OCI-LY7 (cell line): ENCODE measurements at regions of chr2 and their contacts with region 1.

Region 1: DNA sequence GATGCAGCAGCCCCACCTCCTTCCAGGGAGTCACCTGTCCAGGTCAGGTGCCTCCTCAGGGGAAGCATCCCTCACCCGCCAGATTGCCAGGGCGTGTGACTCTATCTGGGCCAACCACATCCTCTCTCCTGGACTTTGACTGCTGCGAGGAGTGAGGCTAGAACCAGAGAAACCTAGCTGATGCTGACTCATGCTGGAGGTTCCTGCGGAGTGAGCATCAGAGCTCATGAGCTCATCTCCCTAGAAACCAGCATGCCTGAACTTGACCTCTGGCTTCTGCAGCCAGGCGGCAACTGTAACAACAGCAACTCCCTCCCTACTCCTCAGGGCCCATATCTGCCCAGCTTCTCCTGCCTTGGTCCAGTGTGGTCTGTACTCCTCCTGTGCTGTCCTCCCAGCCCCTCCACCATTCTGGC is 28.3 kb upstream of the NT5DC4 start:
- DNase-seq: peak; percentile 22
- H3K4me3 ChIP-seq: no peak overlapping the region
- H3K27ac ChIP-seq: no peak overlapping the region
- H3K4me1 ChIP-seq: peaks cover 4% of the 10 kb centered on the region
- CTCF ChIP-seq: no peak

Region 2: GRCh38 chr2:112626604-112627059 is 65.9 kb before region 1 on chr2:
- CTCF ChIA-PET with region 1: no interaction called
- POLR2A ChIA-PET with region 1: interaction called, 5 read pairs
- intact Hi-C with region 1: loop called (anchors 1 kb)
- DNase-seq: peak; percentile 72
- H3K4me3 ChIP-seq: peak overlapping the region; percentile 23
- H3K27ac ChIP-seq: no peak overlapping the region
- H3K4me1 ChIP-seq: peaks cover 15% of the 10 kb centered on the region
- CTCF ChIP-seq: peak; percentile 94

Region 3: DNA sequence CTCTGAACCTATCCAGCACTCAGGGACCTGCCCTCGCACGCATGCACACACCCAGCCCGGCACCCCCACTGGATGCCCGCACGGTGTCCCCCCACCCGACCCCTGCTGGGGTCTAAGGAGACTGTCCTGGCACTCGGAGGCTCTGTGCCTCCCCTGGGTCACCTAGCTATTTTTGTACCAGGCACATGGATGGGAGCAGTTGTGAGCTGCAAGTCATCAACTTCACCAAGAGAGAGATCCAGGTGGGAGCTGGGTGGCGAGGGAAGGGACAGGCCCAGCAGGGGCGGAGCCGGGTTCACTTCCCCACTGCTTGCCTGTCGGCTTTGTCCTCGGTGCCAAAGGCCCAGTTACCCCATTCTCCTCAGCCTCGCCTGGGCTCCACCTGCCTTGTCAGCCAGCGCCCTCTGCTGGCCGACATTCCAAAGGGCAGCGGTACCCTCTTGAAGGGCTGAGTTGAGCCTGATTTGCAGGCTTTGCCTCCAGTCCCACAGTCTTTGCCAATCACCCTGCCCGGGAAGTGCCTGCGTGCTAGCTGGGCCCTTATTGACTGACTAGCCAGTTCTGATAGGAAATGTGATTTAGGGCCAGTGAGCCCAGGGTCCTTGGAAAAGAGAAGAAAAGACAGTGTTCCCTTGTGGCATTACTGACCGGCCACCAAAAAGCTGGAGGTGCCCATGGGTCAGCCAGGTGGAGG is 34.1 kb after region 1 on chr2:
- CTCF ChIA-PET with region 1: interaction called, 3 read pairs
- POLR2A ChIA-PET with region 1: no interaction called
- intact Hi-C with region 1: loop called (anchors 5 kb)
- DNase-seq: peak; percentile 87
- H3K4me3 ChIP-seq: no peak overlapping the region
- H3K27ac ChIP-seq: no peak overlapping the region
- H3K4me1 ChIP-seq: peaks cover 5% of the 10 kb centered on the region
- CTCF ChIP-seq: peak; percentile 94

Region 4: GRCh38 chr2:112794131-112794733 is 101.7 kb after region 1 on chr2:
- CTCF ChIA-PET with region 1: no interaction called
- POLR2A ChIA-PET with region 1: no interaction called
- intact Hi-C with region 1: no loop called
- DNase-seq: peak; percentile 80
- H3K4me3 ChIP-seq: no peak overlapping the region
- H3K27ac ChIP-seq: peak overlapping the region; percentile 34
- H3K4me1 ChIP-seq: peaks cover 14% of the 10 kb centered on the region
- CTCF ChIP-seq: no peak